Posterior cingulate gyrus (tissue), 11 donors: ENCODE measurements at regions of chr2 and their contacts with region 1.

Region 1: DNA sequence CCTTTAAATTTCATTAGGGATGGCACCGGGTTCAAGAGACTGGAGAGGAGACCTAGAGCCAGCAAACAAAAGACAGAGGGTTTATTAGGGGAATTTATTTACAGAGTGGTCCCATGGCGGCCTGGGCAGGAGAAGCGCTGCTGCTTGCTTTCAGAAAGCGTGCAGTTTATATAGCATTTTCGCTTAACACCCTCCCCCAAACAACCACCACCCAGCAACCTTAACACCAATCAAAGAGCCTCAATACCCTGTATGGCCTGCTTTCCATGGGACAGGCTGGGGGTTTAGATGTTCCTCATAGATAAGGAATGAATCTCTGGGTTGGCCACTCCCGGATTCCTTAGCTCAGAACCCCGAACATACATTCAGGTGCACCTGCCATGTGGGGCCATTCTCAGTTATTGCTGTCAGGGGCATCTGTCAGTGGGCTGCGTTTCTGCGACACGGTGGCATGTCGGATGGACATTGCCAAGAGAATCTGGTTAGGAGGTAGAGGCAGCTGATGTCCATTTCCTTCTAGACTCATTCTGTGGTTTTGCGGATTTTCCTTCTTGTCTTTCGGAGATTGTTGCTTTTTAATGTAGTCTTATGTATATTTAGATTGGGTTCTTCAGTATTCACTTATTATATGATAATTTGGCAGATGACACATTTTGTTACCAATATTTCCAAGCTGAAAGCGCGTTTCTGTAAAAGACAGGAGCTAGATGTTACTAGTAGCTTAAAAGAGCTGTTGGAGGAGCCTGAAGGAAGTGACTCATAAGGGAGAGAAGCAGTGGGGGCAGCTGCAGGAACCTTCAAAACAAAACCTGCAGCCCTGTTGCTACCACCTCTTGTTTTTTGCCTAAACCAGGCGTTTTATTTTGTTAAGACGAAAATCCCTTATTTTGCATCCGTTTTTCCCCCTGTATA is 7.2 kb downstream of the AGAP1 start:
- DNase-seq: no peak

Region 2: GRCh38 chr2:235551965-235552364 is 50.9 kb after region 1 on chr2:
- intact Hi-C with region 1: loop called (anchors 10 kb)
- DNase-seq: peak; percentile 28 to 96 (median 66)

Region 3: DNA sequence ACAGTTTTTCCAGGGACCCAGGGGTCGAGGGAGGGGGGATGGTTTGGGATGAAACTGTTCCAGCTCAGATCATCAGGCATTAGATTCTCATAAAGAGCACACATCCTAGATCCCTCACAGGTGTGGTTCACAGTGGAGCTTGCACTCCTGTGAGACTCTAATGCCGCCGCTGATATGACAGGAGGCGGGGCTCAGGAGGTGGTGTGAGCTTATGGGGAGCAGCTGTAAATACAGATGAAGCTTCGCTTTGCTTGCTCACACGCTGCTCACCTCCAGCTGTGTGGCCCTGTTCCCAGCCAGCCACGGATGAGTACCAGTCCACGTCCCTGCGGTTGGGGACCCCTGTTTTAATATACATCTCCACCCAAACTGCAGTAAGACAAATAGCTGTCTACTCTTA is 197.0 kb after region 1 on chr2:
- intact Hi-C with region 1: no loop called
- DNase-seq: peak in 3 of 10 donors; percentile 13 to 67 (median 65)

Region 4: GRCh38 chr2:235746257-235747084 is 245.5 kb after region 1 on chr2:
- intact Hi-C with region 1: loop called (anchors 10 kb)
- DNase-seq: peak in 7 of 10 donors; percentile 56 to 93 (median 74)

Region 5: DNA sequence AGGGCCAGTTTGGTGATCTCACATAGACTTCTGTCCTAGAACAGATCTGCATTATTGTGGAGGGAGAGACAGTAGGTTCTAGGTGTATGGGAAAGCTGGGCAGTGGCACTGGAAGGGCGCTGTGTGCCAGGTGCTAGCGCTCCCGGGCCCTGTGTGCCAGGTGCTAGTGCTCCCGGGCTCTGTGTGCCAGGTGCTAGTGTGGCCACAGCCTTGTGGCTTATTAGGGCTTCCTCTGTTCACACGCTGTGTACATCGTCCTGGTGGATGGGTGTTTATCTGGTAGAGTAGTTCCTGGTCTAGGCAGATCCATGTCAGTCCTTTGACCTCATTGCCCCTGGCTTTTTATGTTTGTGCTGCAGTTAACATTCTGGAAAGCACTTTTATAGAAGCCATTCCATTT is 256.2 kb after region 1 on chr2:
- intact Hi-C with region 1: no loop called
- DNase-seq: peak in 1 of 10 donors; percentile 52